Lower leg skin (tissue), 4 donors: ENCODE measurements at regions of chr9 and their contacts with region 1.

Region 1: GRCh38 chr9:72856972-72857623 is 95.8 kb downstream of the ALDH1A1 start:
- DNase-seq: peak in 1 of 2 donors; percentile 43
- H3K4me3 ChIP-seq: no peak overlapping the region
- CTCF ChIP-seq: no peak
- POLR2A ChIP-seq: no peak

Region 2: GRCh38 chr9:71984403-71984802 is 872.7 kb before region 1 on chr9:
- intact Hi-C with region 1: no loop called
- DNase-seq: no peak
- H3K4me3 ChIP-seq: no peak overlapping the region
- CTCF ChIP-seq: no peak
- POLR2A ChIP-seq: no peak

Region 3: DNA sequence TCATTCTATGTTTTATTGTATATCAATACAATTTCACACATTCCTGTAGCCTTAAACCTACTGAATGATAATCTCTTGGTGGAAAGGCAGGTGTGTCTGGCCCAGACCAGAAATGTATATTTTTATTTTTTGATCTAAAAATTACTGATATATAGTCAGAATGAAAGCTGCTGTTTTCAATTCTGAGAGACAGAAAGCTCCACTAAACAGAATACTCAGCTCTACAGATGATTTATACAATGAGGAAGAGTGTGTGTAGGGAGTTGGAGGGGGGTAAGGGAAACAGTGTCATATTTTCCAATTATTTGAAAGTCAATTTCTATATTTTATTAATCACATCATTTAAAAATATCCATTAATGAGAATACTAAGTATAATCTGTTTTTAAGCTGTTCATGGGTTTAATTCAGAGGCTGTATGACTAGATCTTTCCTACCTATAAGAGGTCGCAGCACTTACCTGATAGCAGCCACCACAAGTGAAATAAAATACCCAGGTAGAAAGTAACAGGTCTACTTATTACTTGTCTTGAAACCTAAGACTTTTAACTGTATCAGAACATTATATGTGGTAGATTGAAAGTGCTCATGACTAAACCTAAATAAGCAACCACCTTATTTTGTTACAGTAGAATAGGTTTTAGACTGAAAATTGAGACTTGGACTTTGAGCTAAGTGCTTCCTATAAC is 152.3 kb before region 1 on chr9:
- intact Hi-C with region 1: no loop called
- DNase-seq: no peak
- H3K4me3 ChIP-seq: no peak overlapping the region
- CTCF ChIP-seq: no peak
- POLR2A ChIP-seq: no peak

Region 4: DNA sequence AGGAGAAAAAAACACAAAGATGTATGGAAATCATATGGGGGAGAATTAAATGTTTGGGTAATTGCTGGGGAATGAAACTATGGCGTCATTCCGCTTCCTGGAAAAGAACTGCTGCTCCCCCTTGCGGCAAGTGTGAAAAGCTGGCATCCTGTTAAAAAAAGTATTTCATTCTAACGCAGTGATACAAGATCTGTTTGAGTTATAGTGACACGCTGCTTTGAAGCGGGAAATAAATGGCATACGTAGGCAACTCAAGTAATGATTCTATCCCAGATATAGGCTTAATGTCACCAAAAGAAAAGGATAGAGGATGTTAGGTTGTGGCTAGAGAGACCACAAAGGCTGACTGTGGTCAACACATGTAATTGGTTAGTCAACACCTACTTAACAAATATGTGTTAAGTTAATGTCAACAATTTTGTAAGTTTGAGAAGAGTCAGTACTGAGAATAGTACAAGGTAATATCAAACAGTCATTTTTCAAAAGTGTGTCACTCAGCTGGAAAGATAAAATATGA is 166.0 kb after region 1 on chr9:
- intact Hi-C with region 1: loop called (anchors 5 kb)
- DNase-seq: no peak
- H3K4me3 ChIP-seq: no peak overlapping the region
- CTCF ChIP-seq: peak in 1 of 3 donors; percentile 80
- POLR2A ChIP-seq: no peak